ENCODE measurements at regions of chr19 and their contacts with region 1.

Region 1: DNA sequence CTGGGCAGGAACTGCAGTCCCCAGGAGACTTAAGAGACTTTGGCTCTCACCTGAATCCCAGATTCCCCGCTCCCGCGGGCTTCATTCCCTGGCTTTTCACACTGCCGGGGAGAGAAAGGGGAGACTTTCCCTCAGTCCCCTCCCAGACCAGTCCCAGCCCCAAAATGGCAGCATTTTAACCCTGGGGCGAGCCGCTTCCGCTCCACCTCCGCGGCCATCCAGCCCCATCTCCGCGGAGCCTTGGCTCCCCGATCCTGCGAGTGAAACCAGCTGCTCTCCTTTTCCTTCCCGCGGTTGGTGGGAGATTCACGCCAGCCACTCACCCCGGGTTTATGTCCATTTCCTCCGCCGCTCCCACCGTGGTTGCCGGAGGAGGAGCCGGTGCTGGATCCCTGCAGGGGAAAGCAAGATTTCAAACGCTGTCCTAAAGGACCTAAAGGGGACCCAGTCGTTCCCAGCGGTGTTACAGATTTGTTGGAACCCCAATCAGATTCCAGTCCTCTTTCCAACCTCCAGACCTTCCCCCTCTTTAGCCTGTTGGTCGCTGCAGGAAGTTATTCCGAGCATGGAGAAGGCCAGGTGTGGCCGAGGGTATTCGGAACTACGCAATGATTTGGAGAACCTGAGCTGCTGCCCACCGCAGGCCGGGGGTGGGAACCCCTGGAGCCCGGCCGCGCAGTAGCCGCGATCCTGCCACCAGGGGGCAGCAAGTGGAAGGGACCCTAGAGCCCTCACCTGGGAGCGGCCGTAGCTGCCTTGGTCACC is 3.4 kb downstream of the DMKN start:
- DNase-seq: peak; percentile 46
- H3K4me3 Mint-ChIP-seq: peak overlapping the region; percentile 57
- H3K27ac Mint-ChIP-seq: no peak overlapping the region
- H3K4me1 Mint-ChIP-seq: peaks cover 6% of the 10 kb centered on the region
- H3K27me3 Mint-ChIP-seq: peaks cover 45% of the 10 kb centered on the region

Region 2: GRCh38 chr19:35533822-35534521 is 23.9 kb after region 1 on chr19:
- intact Hi-C with region 1: loop called (anchors 2 kb)
- DNase-seq: peak; percentile 21
- H3K4me3 Mint-ChIP-seq: peak overlapping the region; percentile 56
- H3K27ac Mint-ChIP-seq: peak overlapping the region; percentile 26
- H3K4me1 Mint-ChIP-seq: peaks cover 7% of the 10 kb centered on the region
- H3K27me3 Mint-ChIP-seq: peaks cover 26% of the 10 kb centered on the region

Region 3: DNA sequence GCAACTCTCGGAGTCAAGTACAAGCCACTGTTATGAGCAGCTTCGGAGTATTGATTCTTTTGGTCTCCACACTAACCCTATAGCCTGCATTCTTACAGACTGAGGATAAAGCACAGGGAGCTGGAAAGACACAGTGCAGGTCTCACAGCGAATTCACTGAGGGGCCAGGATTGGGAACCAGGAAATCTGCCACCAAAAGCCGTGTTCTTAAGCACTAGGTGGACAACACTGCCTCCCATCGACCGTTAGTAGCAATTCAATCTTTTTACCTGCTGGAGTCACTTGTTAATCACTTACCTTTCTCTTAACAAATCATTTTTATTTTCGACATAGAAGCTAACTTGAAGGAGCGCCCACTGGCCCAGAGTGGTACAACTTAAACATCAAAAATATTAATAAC is 82.2 kb after region 1 on chr19:
- intact Hi-C with region 1: loop called (anchors 1 kb)
- DNase-seq: no peak
- H3K4me3 Mint-ChIP-seq: no peak overlapping the region
- H3K27ac Mint-ChIP-seq: no peak overlapping the region
- H3K4me1 Mint-ChIP-seq: peaks cover 10% of the 10 kb centered on the region
- H3K27me3 Mint-ChIP-seq: peaks cover 4% of the 10 kb centered on the region